K562 (cell line): ENCODE measurements at regions of chr1 and their contacts with region 1.

Region 1: DNA sequence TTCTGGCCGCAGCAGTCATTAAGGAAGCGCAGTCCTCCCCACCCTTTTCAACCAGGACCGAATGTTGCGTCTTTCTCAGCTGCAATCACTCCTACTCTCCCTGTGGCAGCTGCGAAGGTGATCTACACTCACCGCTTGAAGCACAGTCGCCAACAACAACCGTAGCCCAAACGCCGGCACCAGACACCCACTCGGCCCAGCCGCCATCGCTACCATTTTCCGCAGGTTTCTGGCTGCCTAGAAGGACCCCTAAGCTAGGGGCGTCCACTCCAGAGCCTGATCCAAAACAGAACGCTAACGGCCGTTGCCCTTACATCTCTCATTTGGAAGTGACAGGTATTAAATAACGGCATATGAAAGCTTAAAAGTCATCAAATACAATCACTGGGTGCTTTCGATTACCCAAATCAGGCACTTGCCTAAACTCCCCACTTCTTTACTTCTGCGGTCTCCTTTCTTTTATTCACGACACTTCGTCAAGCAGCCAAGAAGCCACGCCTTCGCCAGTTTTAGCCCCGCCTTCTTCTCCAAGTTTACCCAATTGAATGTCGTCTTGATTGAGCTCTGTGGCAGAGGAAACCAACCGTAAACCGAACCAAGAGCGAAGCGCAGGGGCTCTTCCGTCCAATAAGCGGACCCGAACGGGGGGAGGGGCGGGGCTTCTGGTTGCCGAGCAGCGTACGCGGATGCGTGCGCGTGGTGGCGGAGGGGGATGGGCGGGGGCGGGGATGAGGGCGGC is at the start of gene SELENOF:
- DNase-seq: peak; percentile 93 to 99 (median 97)
- ATAC-seq: peak; percentile 87
- H3K4me3 ChIP-seq: peak within 1 kb of the TSS; percentile 92
- H3K27ac ChIP-seq: peak within 1 kb of the TSS; percentile 99
- H3K4me1 ChIP-seq: peaks cover 6 to 10% of the 10 kb centered on the region in 2 experiments; a peak in 4 of 5 replicates
- H3K27me3 ChIP-seq: no peaks in the 10 kb centered on the region
- CTCF ChIP-seq: no peak
- EP300 ChIP-seq: no peak
- POLR2A ChIP-seq: peak; percentile 93
- RAD21 ChIP-seq: 0 out of 4 replicates have a peak, but pooled peaks of 1 of the 2 experiments have one; percentile 23
- polyA plus RNA-seq, gene SELENOF: 371 to 394 TPM

Region 2: DNA sequence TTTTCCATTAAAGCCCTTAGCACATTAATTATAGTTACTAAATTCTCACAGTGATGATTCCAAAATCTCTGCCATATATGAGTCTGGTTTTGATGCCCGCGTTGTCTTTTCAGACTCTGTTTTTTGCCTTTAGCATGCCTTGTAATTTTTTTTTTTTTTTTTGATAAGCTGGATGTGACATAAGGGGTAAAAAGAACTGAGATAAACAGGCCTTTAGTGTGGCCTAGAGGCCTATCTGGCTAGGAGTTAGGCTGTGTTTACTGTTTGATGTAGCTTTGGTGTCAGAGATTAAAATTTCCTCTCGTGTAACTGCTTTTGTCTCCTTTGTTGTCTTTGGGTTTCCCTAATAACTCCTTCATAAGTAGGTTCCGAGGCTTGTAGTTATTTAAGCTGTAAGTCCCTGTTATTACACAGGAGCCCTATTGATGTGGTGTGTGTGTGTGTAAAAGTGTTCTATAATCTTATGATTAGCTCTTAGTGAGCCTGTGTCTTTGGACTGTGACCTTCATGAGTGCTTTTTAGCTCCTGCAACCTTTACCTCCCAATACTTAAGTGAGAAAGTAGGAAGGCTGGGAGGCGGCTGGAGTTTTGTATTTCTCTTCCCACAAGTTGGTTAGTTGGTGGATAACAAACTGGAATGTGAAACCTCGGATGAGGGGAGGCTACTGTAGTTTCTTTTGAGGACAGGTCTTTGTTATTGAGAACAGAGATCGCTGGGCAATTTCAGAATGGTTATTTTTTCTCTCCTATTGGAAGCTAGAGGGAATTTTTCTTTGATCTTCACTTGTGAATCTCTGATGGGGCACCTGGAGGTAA is 19.7 kb after region 1 on chr1:
- CTCF ChIA-PET with region 1: no interaction called
- POLR2A ChIA-PET with region 1: interaction called, 36 read pairs
- in situ Hi-C with region 1: no loop called
- intact Hi-C with region 1: no loop called
- DNase-seq: peak in 2 of 4 experiments; percentile 19 to 53
- ATAC-seq: peak; percentile 79
- H3K4me3 ChIP-seq: peak overlapping the region; percentile 7
- H3K27ac ChIP-seq: peak overlapping the region; percentile 76
- H3K4me1 ChIP-seq: peaks cover 2 to 8% of the 10 kb centered on the region in 2 experiments; a peak in 3 of 5 replicates
- H3K27me3 ChIP-seq: no peaks in the 10 kb centered on the region
- CTCF ChIP-seq: no peak; a peak in 1 of 6 replicates
- EP300 ChIP-seq: no peak
- POLR2A ChIP-seq: no peak
- RAD21 ChIP-seq: 0 out of 4 replicates have a peak, but pooled peaks have one; percentile 9 to 11

Region 3: GRCh38 chr1:86950712-86951419 is 36.8 kb after region 1 on chr1:
- CTCF ChIA-PET with region 1: no interaction called
- POLR2A ChIA-PET with region 1: interaction called, 4 read pairs
- in situ Hi-C with region 1: no loop called
- intact Hi-C with region 1: loop called (anchors 5 kb)
- DNase-seq: peak in 3 of 4 experiments; percentile 19 to 74 (median 29)
- ATAC-seq: peak; percentile 61
- H3K4me3 ChIP-seq: no peak overlapping the region
- H3K27ac ChIP-seq: peak overlapping the region; percentile 46; the same call in 2 of the 3 replicates
- H3K4me1 ChIP-seq: peaks cover 0 to 36% of the 10 kb centered on the region in 2 experiments; a peak in 3 of 5 replicates
- H3K27me3 ChIP-seq: no peaks in the 10 kb centered on the region
- CTCF ChIP-seq: no peak
- EP300 ChIP-seq: no peak
- POLR2A ChIP-seq: no peak
- RAD21 ChIP-seq: no peak

Region 4: DNA sequence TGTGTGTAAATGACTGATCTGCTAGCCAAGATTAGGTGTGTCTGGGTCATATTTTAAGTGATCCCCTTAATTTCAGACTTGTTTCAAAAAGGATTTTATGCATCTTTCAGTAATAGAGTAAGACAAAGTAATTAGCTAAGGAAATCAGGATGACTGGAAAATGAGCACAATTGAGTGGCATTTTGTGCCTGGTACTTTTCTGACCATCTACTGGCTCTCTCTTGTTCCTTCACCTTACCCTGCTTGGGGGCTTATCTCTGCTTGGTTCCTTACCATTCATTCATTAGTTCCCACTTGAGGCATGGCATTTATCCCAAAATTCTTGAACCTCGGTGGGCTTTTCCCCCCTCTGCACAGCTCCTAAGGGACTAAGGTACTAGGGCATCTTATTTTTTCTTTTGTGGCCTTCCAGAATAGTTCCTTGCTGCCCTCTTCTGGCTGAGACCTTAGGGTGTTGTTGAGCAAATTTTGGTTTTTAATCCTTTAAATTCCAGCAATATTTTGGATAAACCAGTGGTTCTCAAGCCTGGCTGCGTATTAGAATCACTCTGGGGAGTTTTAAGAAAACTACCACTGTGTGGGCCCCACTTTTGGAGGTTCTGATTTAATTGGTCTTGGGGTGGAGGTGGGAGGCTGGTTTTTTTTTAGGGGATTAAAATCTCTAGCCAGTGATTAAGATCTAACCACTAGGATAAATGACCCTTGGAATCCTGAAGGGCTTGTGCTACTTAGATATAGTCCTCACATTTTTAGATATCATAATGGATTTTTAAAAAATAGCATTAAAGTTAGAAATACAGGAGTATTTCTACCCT is 51.2 kb after region 1 on chr1:
- CTCF ChIA-PET with region 1: no interaction called
- POLR2A ChIA-PET with region 1: no interaction called
- in situ Hi-C with region 1: no loop called
- intact Hi-C with region 1: loop called (anchors 2 kb)
- DNase-seq: peak in 2 of 4 experiments; percentile 24 to 56
- ATAC-seq: peak; percentile 86
- H3K4me3 ChIP-seq: no peak overlapping the region
- H3K27ac ChIP-seq: no peak overlapping the region
- H3K4me1 ChIP-seq: peaks cover 0 to 6% of the 10 kb centered on the region in 2 experiments; a peak in 1 of 5 replicates
- H3K27me3 ChIP-seq: no peaks in the 10 kb centered on the region
- CTCF ChIP-seq: peak; percentile 61 to 63 (median 62); a peak in 5 of 6 replicates
- EP300 ChIP-seq: no peak
- POLR2A ChIP-seq: no peak
- RAD21 ChIP-seq: peak; percentile 36 to 80; a peak in 3 of 4 replicates

Region 5: DNA sequence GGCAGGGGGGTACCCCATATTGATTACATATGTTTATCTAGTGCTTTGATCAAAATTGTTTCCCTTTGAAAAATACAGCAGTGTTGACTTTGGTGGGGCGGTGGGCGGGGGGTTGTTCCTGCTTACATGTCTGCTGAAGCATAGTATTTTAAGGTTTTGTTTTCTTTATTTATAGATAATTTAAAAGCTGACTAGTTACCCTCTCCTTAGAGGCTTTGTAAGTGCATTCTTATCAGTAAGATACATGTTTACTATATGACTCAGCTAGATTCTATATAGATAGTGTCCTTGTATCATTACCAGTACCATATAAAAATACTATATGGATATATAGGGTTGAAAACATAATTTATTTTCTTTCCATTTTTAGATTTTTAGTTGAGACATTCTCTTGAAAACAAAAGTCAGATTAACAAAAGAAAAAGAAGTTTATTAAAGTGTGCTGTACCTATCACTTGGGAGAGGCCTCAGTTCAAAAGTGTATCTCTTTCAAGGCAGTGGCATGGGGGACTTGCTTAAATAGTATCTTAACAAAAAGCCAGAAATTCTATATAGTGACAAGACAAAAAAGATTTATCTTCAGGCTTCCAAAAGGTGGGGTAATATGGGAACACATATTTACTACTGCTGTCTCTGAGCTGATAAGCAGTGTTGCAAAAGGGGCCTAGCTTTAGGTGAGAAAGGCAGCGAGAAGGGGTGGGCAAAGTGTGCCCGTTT is 79.4 kb after region 1 on chr1:
- CTCF ChIA-PET with region 1: no interaction called
- POLR2A ChIA-PET with region 1: interaction called, 4 read pairs
- in situ Hi-C with region 1: no loop called
- intact Hi-C with region 1: loop called (anchors 1 kb)
- DNase-seq: peak in 2 of 4 experiments; percentile 52 to 79
- ATAC-seq: peak; percentile 62
- H3K4me3 ChIP-seq: no peak overlapping the region; the same call in 1 of the 2 replicates
- H3K27ac ChIP-seq: peak overlapping the region; percentile 77
- H3K4me1 ChIP-seq: peaks cover 15 to 61% of the 10 kb centered on the region in 2 experiments
- H3K27me3 ChIP-seq: no peaks in the 10 kb centered on the region
- CTCF ChIP-seq: no peak
- EP300 ChIP-seq: peak; percentile 83
- POLR2A ChIP-seq: no peak
- RAD21 ChIP-seq: no peak; a peak in 1 of 4 replicates